Activated CD8-positive, alpha-beta memory T cell treated with anti-CD3 and anti-CD28 coated beads, Interleukin-2, amount 10 ng/mL, durations not matched to agents 7 days and 5 days (primary cell): ENCODE measurements at regions of chr19 and their contacts with region 1.

Region 1: DNA sequence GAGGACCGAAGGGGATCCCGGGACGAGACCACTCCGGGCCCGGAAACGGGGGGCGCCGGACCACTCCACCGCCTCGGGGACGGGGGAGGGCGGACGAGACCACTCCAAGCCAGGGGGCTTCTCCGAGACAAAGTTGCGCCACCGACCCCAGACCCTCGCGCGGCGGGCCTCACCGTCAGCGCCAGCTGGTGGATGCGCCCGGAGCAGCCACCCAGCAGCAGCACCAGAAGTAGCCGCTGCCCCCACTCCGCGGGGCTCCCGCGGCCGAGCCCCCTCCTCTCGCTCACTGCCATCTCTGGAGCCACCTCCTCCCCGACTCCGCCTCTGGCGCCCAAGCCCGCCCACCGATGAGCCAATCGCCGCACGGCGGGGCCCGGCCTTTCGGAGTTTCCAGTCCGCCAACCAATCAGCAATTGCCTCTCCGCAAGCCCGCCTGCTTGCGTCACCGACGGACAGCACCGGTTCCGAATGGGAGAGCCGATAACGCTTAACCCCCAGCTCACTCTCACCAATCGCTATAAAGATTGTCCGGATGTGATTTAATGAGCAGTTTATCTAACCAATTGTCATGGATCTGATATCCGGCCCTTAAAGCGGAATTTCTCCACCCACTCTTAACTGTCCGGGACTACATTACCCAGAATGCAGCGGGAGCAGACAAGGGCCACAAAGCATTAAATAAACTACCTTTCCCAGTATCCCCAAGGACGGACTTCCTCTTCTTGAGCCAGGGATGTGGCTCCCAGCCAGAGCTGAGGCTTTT is at the start of gene GPR108:
- DNase-seq: peak; percentile 100
- ATAC-seq: peak; percentile 81
- H3K4me3 Mint-ChIP-seq: peak within 1 kb of the TSS; percentile 84
- H3K27ac Mint-ChIP-seq: peak within 1 kb of the TSS; percentile 99
- H3K4me1 Mint-ChIP-seq: peaks cover 36% of the 10 kb centered on the region
- H3K27me3 Mint-ChIP-seq: no peaks in the 10 kb centered on the region
- total RNA-seq, gene GPR108: 77.2 to 100 TPM

Region 2: GRCh38 chr19:6632002-6632621 is 105.4 kb before region 1 on chr19:
- CTCF ChIA-PET with region 1: interaction called, 61 read pairs
- DNase-seq: peak; percentile 89
- ATAC-seq: peak; percentile 85
- H3K4me3 Mint-ChIP-seq: no peak overlapping the region
- H3K27ac Mint-ChIP-seq: peak overlapping the region; percentile 52
- H3K4me1 Mint-ChIP-seq: peaks cover 30% of the 10 kb centered on the region
- H3K27me3 Mint-ChIP-seq: no peaks in the 10 kb centered on the region

Region 3: DNA sequence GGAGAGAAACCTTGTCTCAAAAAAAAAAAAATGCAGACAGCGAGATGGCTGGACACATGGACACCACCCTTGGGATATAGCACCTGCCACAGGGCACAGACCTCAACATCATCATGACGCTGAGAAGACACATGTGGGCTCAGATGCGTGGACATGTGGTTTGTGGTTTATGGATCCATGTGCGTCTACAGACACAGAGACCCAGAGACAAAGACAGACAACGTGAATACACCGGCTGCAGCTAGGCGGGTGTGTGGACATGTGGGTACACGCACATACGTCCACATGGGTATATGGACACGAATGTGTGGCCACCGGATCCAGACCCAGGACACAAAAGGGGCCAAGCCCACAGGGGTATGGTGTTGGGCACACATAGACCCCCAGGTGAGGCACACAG is 68.8 kb before region 1 on chr19:
- CTCF ChIA-PET with region 1: interaction called, 13 read pairs
- DNase-seq: peak; percentile 58
- ATAC-seq: no peak
- H3K4me3 Mint-ChIP-seq: peak overlapping the region; percentile 99
- H3K27ac Mint-ChIP-seq: peak overlapping the region; percentile 90
- H3K4me1 Mint-ChIP-seq: peaks cover 44% of the 10 kb centered on the region
- H3K27me3 Mint-ChIP-seq: peaks cover 9% of the 10 kb centered on the region

Region 4: GRCh38 chr19:6718741-6719539 is 18.5 kb before region 1 on chr19:
- CTCF ChIA-PET with region 1: no interaction called
- DNase-seq: peak; percentile 57
- ATAC-seq: peak; percentile 70
- H3K4me3 Mint-ChIP-seq: no peak overlapping the region
- H3K27ac Mint-ChIP-seq: no peak overlapping the region
- H3K4me1 Mint-ChIP-seq: peaks cover 38% of the 10 kb centered on the region
- H3K27me3 Mint-ChIP-seq: peaks cover 2% of the 10 kb centered on the region

Region 5: DNA sequence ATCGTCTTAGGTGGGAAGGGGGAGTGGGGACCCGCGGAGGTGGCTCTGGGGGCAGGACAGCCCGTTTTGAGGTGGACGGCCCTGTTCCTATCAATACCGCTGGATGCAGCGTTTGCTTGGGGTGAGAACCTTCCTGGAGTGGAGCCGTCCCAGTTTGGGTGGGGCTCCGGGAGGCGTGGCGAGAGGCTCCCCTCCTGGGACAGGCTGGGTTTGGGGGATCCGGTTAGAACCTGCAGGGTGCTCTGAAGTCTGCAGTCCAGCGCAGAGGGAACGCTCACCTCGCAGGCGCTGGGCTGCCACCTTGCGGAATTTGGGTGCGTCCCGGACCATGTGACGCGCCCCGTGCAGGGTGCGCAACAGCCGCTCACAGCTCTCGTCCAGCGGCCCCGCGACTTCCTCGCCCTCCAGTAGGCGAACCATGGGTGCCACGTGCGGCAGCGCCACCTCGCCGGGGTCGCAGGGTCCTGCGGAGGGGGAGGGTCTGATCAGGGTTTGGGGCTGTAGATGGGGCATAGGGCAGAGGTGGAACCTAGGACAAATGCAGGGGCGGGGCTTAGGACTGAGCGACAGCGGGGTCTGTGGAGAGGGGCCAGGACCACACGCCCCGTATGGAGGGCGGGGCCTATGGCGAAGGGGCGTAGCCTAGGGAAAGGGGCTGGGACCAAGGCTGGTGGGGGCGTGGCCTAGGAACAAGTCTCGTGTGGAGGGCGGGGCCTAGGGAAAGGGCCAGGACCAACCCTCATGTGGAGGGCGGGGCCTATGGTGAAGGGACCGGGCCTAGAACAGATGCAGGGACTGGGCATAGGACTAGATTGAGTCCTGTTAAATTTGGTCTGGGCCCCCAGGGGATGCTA is 15.9 kb after region 1 on chr19:
- CTCF ChIA-PET with region 1: interaction called, 15 read pairs
- DNase-seq: peak; percentile 89
- ATAC-seq: peak; percentile 91
- H3K4me3 Mint-ChIP-seq: peak overlapping the region; percentile 68
- H3K27ac Mint-ChIP-seq: peak overlapping the region; percentile 80
- H3K4me1 Mint-ChIP-seq: peaks cover 15% of the 10 kb centered on the region
- H3K27me3 Mint-ChIP-seq: no peaks in the 10 kb centered on the region

Region 6: DNA sequence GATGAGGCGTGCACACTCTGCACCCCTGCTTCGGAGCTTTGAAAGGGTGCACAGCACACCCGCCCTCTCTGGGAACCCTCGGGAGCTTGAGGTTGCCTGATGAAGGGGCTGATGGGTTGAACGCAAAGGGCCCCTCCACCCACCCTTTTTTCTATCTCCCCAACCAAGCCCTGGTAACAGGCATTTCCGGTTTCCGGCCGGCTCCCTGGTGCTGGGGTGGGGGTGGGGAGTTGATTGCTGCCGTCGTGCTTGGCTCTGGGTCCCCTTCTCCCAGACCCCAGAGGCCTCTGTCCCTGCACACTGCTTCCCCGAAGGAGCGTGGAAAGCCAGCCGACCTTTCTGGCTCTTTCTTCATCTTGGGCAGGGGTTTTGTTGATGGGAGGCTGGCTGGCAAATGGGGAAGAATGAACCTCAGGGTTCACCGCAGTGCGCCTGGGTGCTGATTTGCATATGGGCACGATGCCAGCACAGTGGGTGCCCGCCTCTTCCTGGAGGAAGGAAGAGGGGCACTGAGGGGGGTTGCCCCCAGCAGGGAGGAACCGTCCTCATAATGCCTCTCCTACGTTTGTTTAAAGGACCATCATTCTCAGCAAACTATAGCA is 64.1 kb after region 1 on chr19:
- CTCF ChIA-PET with region 1: interaction called, 12 read pairs
- DNase-seq: peak; percentile 90
- ATAC-seq: peak; percentile 74
- H3K4me3 Mint-ChIP-seq: peak overlapping the region; percentile 78
- H3K27ac Mint-ChIP-seq: peak overlapping the region; percentile 93
- H3K4me1 Mint-ChIP-seq: peaks cover 54% of the 10 kb centered on the region
- H3K27me3 Mint-ChIP-seq: no peaks in the 10 kb centered on the region

Region 7: DNA sequence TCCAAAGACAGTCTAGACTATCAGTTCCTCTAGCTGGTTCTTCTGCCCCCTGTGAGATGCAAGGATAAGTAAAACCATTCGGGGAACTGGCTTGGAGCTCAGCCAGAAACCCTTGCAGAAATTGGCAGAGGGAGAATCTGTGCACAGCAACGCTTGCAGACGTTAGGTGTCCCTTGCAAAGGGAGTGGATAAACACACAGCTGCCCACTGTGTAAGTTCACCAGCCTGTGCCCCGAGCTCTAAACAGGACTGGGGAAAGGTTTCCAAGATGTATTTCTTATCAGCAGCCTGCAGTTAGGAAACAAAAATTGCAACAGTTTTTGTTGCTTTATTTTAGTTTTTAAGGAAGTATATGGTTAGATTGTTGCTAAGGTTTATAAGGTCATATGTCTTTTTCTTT is 130.9 kb after region 1 on chr19:
- CTCF ChIA-PET with region 1: interaction called, 127 read pairs
- DNase-seq: no peak
- ATAC-seq: no peak
- H3K4me3 Mint-ChIP-seq: no peak overlapping the region
- H3K27ac Mint-ChIP-seq: no peak overlapping the region
- H3K4me1 Mint-ChIP-seq: peaks cover 3% of the 10 kb centered on the region
- H3K27me3 Mint-ChIP-seq: no peaks in the 10 kb centered on the region